ENCODE measurements at regions of chr2 and their contacts with region 1.

Region 1: DNA sequence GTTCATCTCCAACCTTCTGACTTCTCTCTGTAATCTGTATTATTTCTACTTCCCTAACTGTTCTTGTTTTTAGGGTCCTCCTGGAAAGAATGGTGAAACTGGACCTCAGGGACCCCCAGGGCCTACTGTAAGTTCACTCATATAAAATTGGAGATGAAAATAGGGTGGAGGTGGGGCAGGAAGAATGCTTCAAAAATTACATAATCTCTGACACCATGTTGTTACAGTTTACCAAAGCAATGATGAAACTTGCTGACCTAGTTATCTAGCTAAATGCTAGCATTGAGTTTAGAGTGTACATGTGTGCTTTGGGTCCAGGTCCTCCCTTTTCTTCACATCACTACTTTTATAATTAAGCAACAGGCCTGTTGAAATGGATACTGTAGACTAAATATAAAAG is 23.1 kb downstream of the COL3A1 start:
- DNase-seq: no peak
- H3K4me3 ChIP-seq: no peak overlapping the region
- H3K27ac ChIP-seq: no peak overlapping the region
- H3K4me1 ChIP-seq: peaks cover 1% of the 10 kb centered on the region
- H3K27me3 ChIP-seq: no peaks in the 10 kb centered on the region
- CTCF ChIP-seq: no peak
- EP300 ChIP-seq: no peak
- POLR2A ChIP-seq: no peak

Region 2: DNA sequence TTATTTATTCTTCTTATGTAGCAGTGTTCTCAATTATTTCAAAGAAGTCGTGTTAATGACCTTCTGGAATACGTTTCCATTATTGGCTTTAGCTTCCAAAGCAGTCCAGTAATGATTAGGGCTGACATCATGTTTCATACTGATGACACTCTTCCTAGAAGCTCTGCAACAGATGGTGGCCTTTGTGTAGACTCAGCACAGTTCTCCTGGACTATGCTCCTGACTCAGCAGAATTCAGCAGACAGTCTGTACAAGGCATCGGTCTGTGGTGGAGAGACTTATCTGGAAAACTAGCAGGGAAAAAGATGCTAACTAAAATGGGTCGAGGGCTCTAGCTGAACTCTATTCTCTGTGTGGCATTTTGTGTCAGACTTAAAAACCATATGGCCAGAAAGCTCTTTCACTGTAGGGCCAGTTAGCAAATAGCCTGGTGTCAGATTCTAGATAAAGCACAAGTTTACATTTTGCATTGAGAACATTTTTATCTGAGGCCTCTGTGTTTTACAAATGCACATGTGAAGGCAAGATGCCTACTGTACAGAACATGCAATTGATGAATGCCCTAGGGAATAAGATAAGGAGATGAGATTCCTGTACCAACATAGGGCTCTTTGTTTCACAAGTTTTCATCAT is 670.5 kb before region 1 on chr2:
- intact Hi-C with region 1: no loop called
- DNase-seq: no peak
- H3K4me3 ChIP-seq: no peak overlapping the region
- H3K27ac ChIP-seq: no peak overlapping the region
- H3K4me1 ChIP-seq: no peaks in the 10 kb centered on the region
- H3K27me3 ChIP-seq: no peaks in the 10 kb centered on the region
- CTCF ChIP-seq: no peak
- EP300 ChIP-seq: no peak
- POLR2A ChIP-seq: no peak

Region 3: DNA sequence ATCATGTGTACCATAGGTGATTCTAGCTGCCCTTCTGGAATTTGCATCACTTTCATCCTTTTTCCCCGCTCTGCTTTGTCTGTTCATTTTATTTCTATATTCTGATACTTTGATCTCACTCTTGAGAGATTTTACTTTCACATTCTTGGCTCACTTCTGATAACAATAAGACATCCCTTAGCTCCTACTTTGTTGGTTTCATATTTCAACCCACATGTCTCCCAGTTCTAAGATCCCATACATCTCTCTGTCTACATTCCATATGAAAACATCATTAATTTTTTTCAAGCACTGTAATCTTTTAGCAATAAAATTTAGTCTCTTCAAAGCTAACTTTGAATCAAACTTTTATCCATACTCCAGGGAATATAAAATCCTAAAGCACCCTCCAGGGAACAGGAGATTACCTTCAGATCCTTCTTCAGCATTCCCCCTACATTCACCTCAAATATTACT is 52.5 kb after region 1 on chr2:
- intact Hi-C with region 1: loop called in 1 of 4 experiments (anchors 10 kb)
- DNase-seq: no peak
- H3K4me3 ChIP-seq: no peak overlapping the region
- H3K27ac ChIP-seq: no peak overlapping the region
- H3K4me1 ChIP-seq: no peaks in the 10 kb centered on the region
- H3K27me3 ChIP-seq: no peaks in the 10 kb centered on the region
- CTCF ChIP-seq: no peak
- EP300 ChIP-seq: no peak
- POLR2A ChIP-seq: no peak

Region 4: DNA sequence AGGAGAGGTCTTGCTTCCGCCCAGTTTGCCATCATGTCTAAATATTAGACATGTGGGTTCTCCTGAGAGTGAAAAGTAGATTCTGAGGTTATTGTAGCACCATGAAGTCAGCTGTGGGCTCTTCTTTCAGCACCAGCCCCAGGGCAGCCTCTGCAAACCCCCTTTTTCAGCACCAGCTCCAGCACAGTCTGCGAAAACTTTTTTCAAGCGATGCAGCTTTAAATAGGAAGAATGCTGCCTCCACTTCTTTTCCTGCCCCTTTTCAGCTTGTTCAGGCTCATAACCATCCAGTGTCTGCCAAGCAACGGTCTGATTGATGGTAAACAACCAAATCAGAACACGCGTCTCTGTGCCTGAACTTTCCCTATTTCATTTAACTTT is 182.3 kb after region 1 on chr2 and contains the start of gene COL5A2:
- intact Hi-C with region 1: no loop called
- DNase-seq: peak; percentile 40 to 62 (median 46)
- H3K4me3 ChIP-seq: peak within 1 kb of the TSS; percentile 56
- H3K27ac ChIP-seq: peak within 1 kb of the TSS; percentile 9 to 60
- H3K4me1 ChIP-seq: peaks cover 1% of the 10 kb centered on the region
- H3K27me3 ChIP-seq: no peaks in the 10 kb centered on the region
- CTCF ChIP-seq: no peak
- EP300 ChIP-seq: no peak
- POLR2A ChIP-seq: no peak
- total RNA-seq, gene COL5A2: 25.2 to 41.1 (median 30.2) TPM

Measured in ovary (tissue), 10 donors.